Activated T-helper 1 cell treated with anti-CD3 and anti-CD28 coated beads, Interleukin-12 subunit alpha, Interleukin-12 subunit beta, Interleukin-2, Interleukin-4 antibody, amounts not matched to agents 30 ng/mL and 10 ng/mL and 1 ng/mL, durations not matched to agents 14 hours and 24 hours and 36 hours (primary cell): ENCODE measurements at regions of chr1 and their contacts with region 1.

Region 1: GRCh38 chr1:113963281-113963906 is 15.9 kb upstream of the OLFML3 start:
- DNase-seq: no peak
- H3K4me3 Mint-ChIP-seq: no peak overlapping the region
- H3K27ac Mint-ChIP-seq: no peak overlapping the region
- H3K4me1 Mint-ChIP-seq: peaks cover 7% of the 10 kb centered on the region
- H3K27me3 Mint-ChIP-seq: no peaks in the 10 kb centered on the region

Region 2: DNA sequence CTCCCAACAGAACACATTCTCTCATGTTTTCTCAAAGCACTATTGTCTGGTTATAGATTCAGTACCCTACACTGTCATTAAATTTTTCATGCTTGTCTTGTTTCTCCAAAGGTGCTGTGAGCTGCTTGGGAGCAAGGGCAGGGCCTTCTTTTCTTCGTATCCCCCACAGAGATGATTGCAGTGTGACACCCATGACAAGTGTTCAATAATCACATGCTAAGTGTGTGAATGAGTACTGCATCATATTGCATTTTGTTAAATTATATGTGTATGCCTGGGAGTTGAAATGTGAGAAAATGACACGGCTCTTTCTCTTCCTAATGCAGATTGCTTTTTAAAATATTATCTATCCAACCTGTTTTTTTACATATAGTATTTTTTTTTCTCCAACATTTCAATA is 630.3 kb before region 1 on chr1:
- intact Hi-C with region 1: no loop called
- DNase-seq: no peak
- H3K4me3 Mint-ChIP-seq: no peak overlapping the region
- H3K27ac Mint-ChIP-seq: no peak overlapping the region
- H3K4me1 Mint-ChIP-seq: no peaks in the 10 kb centered on the region
- H3K27me3 Mint-ChIP-seq: peaks cover 8% of the 10 kb centered on the region

Region 3: DNA sequence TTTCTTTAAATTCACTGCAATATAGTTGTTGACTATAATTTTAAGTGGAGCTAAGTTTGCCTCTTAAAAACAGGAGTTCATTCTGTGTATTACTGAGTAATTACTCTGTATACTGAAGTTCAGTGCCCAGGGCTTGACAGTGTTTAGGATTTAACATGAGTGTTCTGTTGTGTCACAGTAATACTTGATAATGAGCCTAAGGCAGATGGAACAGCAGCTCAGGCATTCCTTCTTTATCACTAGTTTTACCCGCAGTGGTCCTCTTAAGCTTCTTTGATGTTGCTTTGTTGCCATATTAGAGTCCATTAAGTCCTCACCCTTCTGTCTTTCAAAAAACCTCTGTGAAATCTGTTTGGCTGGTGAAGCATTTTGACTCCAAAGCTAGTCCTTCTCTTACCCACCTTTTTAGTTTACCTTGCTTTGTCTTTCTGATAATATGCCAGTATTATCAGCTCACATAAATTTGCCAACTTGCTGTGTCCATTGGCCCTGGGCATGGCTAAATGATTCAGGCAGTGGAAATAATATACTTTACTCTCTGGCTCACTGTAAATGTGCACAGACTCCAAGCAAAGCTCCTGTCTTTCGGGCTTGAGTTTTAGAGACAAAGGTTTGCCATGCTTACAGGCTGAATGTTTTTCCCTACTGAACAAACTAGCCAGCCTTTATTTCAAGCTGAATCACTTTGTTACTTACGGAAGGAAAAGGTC is 16.6 kb before region 1 on chr1:
- intact Hi-C with region 1: loop called (anchors 2 kb)
- DNase-seq: no peak
- H3K4me3 Mint-ChIP-seq: peak overlapping the region; percentile 53
- H3K27ac Mint-ChIP-seq: peak overlapping the region; percentile 41
- H3K4me1 Mint-ChIP-seq: peaks cover 55% of the 10 kb centered on the region
- H3K27me3 Mint-ChIP-seq: no peaks in the 10 kb centered on the region

Region 4: DNA sequence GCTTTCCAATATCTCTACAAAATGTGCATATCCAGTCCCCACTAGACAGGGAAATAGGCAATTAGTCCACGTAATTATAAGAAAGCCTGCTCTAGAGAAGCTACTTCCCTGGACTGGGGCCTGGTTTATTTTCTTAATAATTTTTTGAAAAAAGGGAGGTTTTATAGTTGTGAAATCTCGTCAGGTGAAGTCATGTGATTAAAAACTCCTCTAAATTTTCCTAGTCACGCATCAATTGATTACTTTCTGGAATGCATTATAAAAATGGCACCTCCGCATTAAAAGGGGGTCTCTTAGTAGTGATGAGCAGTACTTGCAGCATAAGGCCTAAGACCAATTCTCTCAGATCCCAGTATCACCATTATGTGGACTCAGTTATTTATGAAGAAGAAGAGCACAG is 439.4 kb after region 1 on chr1:
- intact Hi-C with region 1: no loop called
- DNase-seq: no peak
- H3K4me3 Mint-ChIP-seq: no peak overlapping the region
- H3K27ac Mint-ChIP-seq: no peak overlapping the region
- H3K4me1 Mint-ChIP-seq: no peaks in the 10 kb centered on the region
- H3K27me3 Mint-ChIP-seq: no peaks in the 10 kb centered on the region